ENCODE measurements at regions of chr18 and their contacts with region 1.

Region 1: DNA sequence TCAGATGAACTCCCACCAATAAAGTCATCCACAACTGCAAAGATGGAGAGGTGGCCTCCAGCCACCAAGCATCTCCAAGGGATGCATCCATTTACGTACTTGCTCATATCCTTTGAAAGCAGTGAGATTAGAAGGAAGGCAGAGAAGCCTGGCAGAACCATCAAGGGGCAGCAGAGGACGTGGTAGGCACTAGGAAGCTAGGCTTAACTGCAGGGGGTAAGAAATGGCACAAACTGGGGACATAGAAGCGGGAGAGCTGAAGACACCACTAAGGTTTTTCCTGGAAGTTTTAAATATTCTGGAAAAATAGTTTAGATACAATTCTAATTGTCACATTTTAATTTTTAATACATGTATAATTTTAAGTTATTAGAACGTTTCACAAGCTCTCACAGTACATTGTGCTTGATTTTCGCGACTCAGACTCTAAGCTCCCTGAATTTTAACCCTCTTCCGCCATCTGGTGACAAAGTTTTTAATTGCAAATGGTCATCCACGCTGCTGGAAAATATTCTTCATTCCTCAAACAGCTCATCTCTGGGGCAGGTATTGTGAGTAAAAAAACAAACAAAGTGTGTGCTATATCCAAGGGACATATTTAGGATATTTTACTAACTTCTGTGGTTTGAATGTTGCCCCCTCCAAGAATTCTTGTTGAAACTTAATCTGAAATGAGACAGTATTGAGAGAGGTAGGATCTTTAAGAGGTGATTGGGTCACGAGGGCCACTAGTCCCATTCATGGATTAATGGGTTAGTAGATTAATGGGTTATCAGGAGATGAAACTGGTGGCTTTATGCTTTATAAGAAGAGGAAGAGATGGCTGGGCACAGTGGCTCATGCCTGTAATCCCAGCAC is 1.6 kb upstream of the PSTPIP2 start:
- DNase-seq: peak; percentile 39
- H3K4me3 ChIP-seq: no peak overlapping the region
- H3K27ac ChIP-seq: no peak overlapping the region
- H3K4me1 ChIP-seq: peaks cover 7 to 23% (median 17%) of the 10 kb centered on the region in 4 donors
- H3K27me3 ChIP-seq: no peaks in the 10 kb centered on the region
- CTCF ChIP-seq: peak; percentile 58 to 67 (median 60)
- EP300 ChIP-seq: no peak
- POLR2A ChIP-seq: no peak

Region 2: GRCh38 chr18:45935591-45936335 is 137.9 kb before region 1 on chr18:
- in situ Hi-C with region 1: loop called in 2 of 4 experiments (anchors 10 to 25 kb)
- intact Hi-C with region 1: no loop called
- DNase-seq: no peak
- H3K4me3 ChIP-seq: no peak overlapping the region
- H3K27ac ChIP-seq: no peak overlapping the region
- H3K4me1 ChIP-seq: no peaks in the 10 kb centered on the region
- H3K27me3 ChIP-seq: no peaks in the 10 kb centered on the region
- CTCF ChIP-seq: no peak
- EP300 ChIP-seq: no peak
- POLR2A ChIP-seq: no peak

Region 3: GRCh38 chr18:45967007-45967706 is 106.5 kb before region 1 on chr18 and contains the start of gene EPG5:
- in situ Hi-C with region 1: loop called in 2 of 4 experiments (anchors 10 to 25 kb)
- intact Hi-C with region 1: no loop called
- DNase-seq: peak; percentile 97
- H3K4me3 ChIP-seq: peak within 1 kb of the TSS; percentile 70 to 94 (median 80)
- H3K27ac ChIP-seq: peak within 1 kb of the TSS; percentile 78 to 86 (median 82)
- H3K4me1 ChIP-seq: peaks cover 0 to 32% (median 9%) of the 10 kb centered on the region in 4 donors
- H3K27me3 ChIP-seq: no peaks in the 10 kb centered on the region
- CTCF ChIP-seq: no peak
- EP300 ChIP-seq: no peak
- POLR2A ChIP-seq: peak; percentile 52
- total RNA-seq, gene EPG5: 24.3 to 42.2 (median 35.6) TPM

Region 4: GRCh38 chr18:45993389-45993788 is 80.3 kb before region 1 on chr18:
- in situ Hi-C with region 1: no loop called
- intact Hi-C with region 1: no loop called
- DNase-seq: no peak
- H3K4me3 ChIP-seq: no peak overlapping the region
- H3K27ac ChIP-seq: no peak overlapping the region
- H3K4me1 ChIP-seq: no peaks in the 10 kb centered on the region
- H3K27me3 ChIP-seq: no peaks in the 10 kb centered on the region
- CTCF ChIP-seq: no peak
- EP300 ChIP-seq: no peak
- POLR2A ChIP-seq: no peak

Region 5: DNA sequence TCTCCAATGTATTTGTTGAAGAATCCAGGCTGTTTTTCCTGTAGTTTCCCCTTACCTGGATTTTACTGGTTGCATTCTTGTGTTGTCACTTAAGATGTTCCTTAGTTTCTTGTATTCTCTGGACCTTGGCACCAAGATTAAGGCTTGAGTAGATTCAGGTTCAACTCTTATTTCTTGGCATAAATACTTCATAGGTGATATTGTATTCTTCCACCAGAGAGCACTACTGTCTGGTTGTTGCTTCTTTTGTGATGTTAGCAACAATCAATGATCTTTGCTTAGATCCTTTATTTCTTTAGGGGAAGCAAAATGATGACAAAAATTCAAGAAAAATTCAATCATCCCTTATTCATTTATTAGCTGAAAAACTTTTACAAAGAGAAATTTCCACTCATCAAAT is 372.2 kb after region 1 on chr18:
- in situ Hi-C with region 1: no loop called
- intact Hi-C with region 1: no loop called
- DNase-seq: no peak
- H3K4me3 ChIP-seq: no peak overlapping the region
- H3K27ac ChIP-seq: no peak overlapping the region
- H3K4me1 ChIP-seq: no peaks in the 10 kb centered on the region
- H3K27me3 ChIP-seq: no peaks in the 10 kb centered on the region
- CTCF ChIP-seq: no peak
- EP300 ChIP-seq: no peak
- POLR2A ChIP-seq: no peak

Measured in transverse colon (tissue), 4 donors.